CD8-positive, alpha-beta T cell (primary cell): ENCODE measurements at regions of chr20 and their contacts with region 1.

Region 1: DNA sequence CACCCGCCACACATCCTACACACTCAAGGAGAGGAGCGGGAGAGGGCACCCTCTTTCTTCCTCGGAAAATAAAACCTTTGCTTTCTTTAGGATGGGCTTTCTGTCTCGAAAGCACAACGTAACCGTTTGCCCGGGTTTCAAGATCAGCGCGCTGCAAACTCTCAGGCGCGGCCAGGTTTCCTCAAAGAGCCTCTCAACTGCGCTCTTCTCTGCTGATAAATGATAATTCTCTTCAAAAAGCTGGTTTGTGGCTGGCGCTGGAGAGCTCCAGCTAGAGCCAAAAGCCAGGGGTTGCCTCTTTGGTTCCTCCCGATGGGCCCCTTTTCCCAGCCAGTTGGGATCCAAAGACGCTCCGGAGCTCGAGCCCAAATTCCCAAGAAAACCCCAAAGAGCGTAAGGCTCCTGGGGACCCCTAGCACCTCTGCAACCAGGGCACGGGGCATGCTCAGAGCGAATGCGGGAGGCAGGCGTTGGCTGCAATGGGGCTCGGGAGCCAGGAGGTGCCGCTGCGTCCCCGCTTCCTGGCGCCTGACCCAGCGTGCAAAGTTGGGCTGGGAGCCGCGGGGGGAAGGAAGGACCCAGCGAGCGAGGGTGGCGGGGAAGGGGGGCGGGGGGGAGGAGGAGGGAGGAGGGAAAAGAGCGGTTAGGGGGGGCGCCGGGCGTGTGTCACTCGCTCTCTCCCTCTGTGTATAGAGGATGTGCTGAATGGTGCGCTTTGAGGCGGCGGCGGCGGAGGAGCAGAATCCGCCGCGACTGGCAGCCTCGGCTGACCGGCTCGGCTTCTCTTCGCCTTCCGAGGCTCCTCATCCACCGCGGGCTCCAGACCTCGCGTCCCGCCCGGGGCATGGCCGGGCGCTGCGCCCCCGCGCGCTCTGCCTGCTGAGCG is at the start of gene PLCB1:
- DNase-seq: peak; percentile 53 to 93 (median 77)
- ATAC-seq: peak; percentile 90
- H3K4me3 ChIP-seq: peak within 1 kb of the TSS; percentile 55 to 61
- H3K4me3 Mint-ChIP-seq: peak within 1 kb of the TSS; percentile 80
- H3K27ac ChIP-seq: no peak within 1 kb of the TSS
- H3K27ac Mint-ChIP-seq: no peak within 1 kb of the TSS
- H3K4me1 ChIP-seq: peaks cover 10% of the 10 kb centered on the region
- H3K4me1 Mint-ChIP-seq: peaks cover 24% of the 10 kb centered on the region
- H3K27me3 ChIP-seq: no peaks in the 10 kb centered on the region
- H3K27me3 Mint-ChIP-seq: peaks cover 3% of the 10 kb centered on the region
- CTCF ChIP-seq: peak; percentile 50
- total RNA-seq, gene PLCB1: 4.6 to 5.0 TPM

Region 2: GRCh38 chr20:8043687-8044282 is 88.1 kb before region 1 on chr20:
- CTCF ChIA-PET with region 1: interaction called, 3 read pairs
- POLR2A ChIA-PET with region 1: no interaction called
- intact Hi-C with region 1: loop called (anchors 1 to 5 kb)
- DNase-seq: peak in 3 of 9 experiments; percentile 45 to 80 (median 73)
- ATAC-seq: peak; percentile 71
- H3K4me3 ChIP-seq: no peak overlapping the region
- H3K4me3 Mint-ChIP-seq: no peak overlapping the region
- H3K27ac ChIP-seq: no peak overlapping the region
- H3K27ac Mint-ChIP-seq: no peak overlapping the region
- H3K4me1 ChIP-seq: no peaks in the 10 kb centered on the region
- H3K4me1 Mint-ChIP-seq: peaks cover 2% of the 10 kb centered on the region
- H3K27me3 ChIP-seq: no peaks in the 10 kb centered on the region
- H3K27me3 Mint-ChIP-seq: peaks cover 9% of the 10 kb centered on the region
- CTCF ChIP-seq: peak; percentile 95

Region 3: GRCh38 chr20:8094415-8094818 is 37.4 kb before region 1 on chr20:
- CTCF ChIA-PET with region 1: no interaction called
- POLR2A ChIA-PET with region 1: no interaction called
- intact Hi-C with region 1: no loop called
- DNase-seq: no peak
- ATAC-seq: no peak
- H3K4me3 ChIP-seq: no peak overlapping the region
- H3K4me3 Mint-ChIP-seq: no peak overlapping the region
- H3K27ac ChIP-seq: no peak overlapping the region
- H3K27ac Mint-ChIP-seq: no peak overlapping the region
- H3K4me1 ChIP-seq: no peaks in the 10 kb centered on the region
- H3K4me1 Mint-ChIP-seq: no peaks in the 10 kb centered on the region
- H3K27me3 ChIP-seq: no peaks in the 10 kb centered on the region
- H3K27me3 Mint-ChIP-seq: peaks cover 5% of the 10 kb centered on the region
- CTCF ChIP-seq: no peak

Region 4: GRCh38 chr20:8305449-8305978 is 173.7 kb after region 1 on chr20:
- CTCF ChIA-PET with region 1: interaction called, 9 read pairs
- POLR2A ChIA-PET with region 1: no interaction called
- intact Hi-C with region 1: loop called (anchors 1 kb)
- DNase-seq: peak; percentile 16 to 88 (median 69)
- ATAC-seq: peak; percentile 97
- H3K4me3 ChIP-seq: no peak overlapping the region
- H3K4me3 Mint-ChIP-seq: no peak overlapping the region
- H3K27ac ChIP-seq: no peak overlapping the region
- H3K27ac Mint-ChIP-seq: no peak overlapping the region
- H3K4me1 ChIP-seq: peaks cover 6% of the 10 kb centered on the region
- H3K4me1 Mint-ChIP-seq: peaks cover 7% of the 10 kb centered on the region
- H3K27me3 ChIP-seq: no peaks in the 10 kb centered on the region
- H3K27me3 Mint-ChIP-seq: no peaks in the 10 kb centered on the region
- CTCF ChIP-seq: peak; percentile 67

Region 5: GRCh38 chr20:8535403-8536261 is 403.8 kb after region 1 on chr20:
- CTCF ChIA-PET with region 1: no interaction called
- POLR2A ChIA-PET with region 1: no interaction called
- intact Hi-C with region 1: loop called in 1 of 2 experiments (anchors 5 kb)
- DNase-seq: peak in 2 of 9 experiments; percentile 10 to 11
- ATAC-seq: no peak
- H3K4me3 ChIP-seq: no peak overlapping the region
- H3K4me3 Mint-ChIP-seq: no peak overlapping the region
- H3K27ac ChIP-seq: no peak overlapping the region
- H3K27ac Mint-ChIP-seq: no peak overlapping the region
- H3K4me1 ChIP-seq: no peaks in the 10 kb centered on the region
- H3K4me1 Mint-ChIP-seq: no peaks in the 10 kb centered on the region
- H3K27me3 ChIP-seq: no peaks in the 10 kb centered on the region
- H3K27me3 Mint-ChIP-seq: peaks cover 2% of the 10 kb centered on the region
- CTCF ChIP-seq: no peak